Calu3 (cell line): ENCODE measurements at regions of chr3 and their contacts with region 1.

Region 1: GRCh38 chr3:112642912-112643506 is 2.1 kb upstream of the CCDC80 start:
- DNase-seq: peak; percentile 82
- H3K4me3 Mint-ChIP-seq: peak overlapping the region; percentile 31
- H3K27ac Mint-ChIP-seq: no peak overlapping the region
- H3K4me1 Mint-ChIP-seq: peaks cover 37% of the 10 kb centered on the region
- H3K27me3 Mint-ChIP-seq: no peaks in the 10 kb centered on the region
- CTCF ChIP-seq: no peak

Region 2: GRCh38 chr3:112619295-112619694 is 23.7 kb before region 1 on chr3:
- CTCF ChIA-PET with region 1: no interaction called
- intact Hi-C with region 1: no loop called
- DNase-seq: no peak
- H3K4me3 Mint-ChIP-seq: no peak overlapping the region
- H3K27ac Mint-ChIP-seq: no peak overlapping the region
- H3K4me1 Mint-ChIP-seq: peaks cover 13% of the 10 kb centered on the region
- H3K27me3 Mint-ChIP-seq: no peaks in the 10 kb centered on the region
- CTCF ChIP-seq: no peak

Region 3: GRCh38 chr3:112699436-112699978 is 56.5 kb after region 1 on chr3:
- CTCF ChIA-PET with region 1: no interaction called
- intact Hi-C with region 1: loop called (anchors 1 kb)
- DNase-seq: peak; percentile 37
- H3K4me3 Mint-ChIP-seq: no peak overlapping the region
- H3K27ac Mint-ChIP-seq: no peak overlapping the region
- H3K4me1 Mint-ChIP-seq: no peaks in the 10 kb centered on the region
- H3K27me3 Mint-ChIP-seq: peaks cover 11% of the 10 kb centered on the region
- CTCF ChIP-seq: no peak

Region 4: GRCh38 chr3:112814266-112814665 is 171.3 kb after region 1 on chr3:
- CTCF ChIA-PET with region 1: interaction called, 13 read pairs
- intact Hi-C with region 1: loop called (anchors 1 kb)
- DNase-seq: no peak
- H3K4me3 Mint-ChIP-seq: no peak overlapping the region
- H3K27ac Mint-ChIP-seq: no peak overlapping the region
- H3K4me1 Mint-ChIP-seq: peaks cover 11% of the 10 kb centered on the region
- H3K27me3 Mint-ChIP-seq: no peaks in the 10 kb centered on the region
- CTCF ChIP-seq: no peak

Region 5: GRCh38 chr3:112979240-112979832 is 336.3 kb after region 1 on chr3:
- CTCF ChIA-PET with region 1: interaction called, 12 read pairs
- intact Hi-C with region 1: loop called (anchors 2 kb)
- DNase-seq: peak; percentile 4
- H3K4me3 Mint-ChIP-seq: no peak overlapping the region
- H3K27ac Mint-ChIP-seq: no peak overlapping the region
- H3K4me1 Mint-ChIP-seq: no peaks in the 10 kb centered on the region
- H3K27me3 Mint-ChIP-seq: no peaks in the 10 kb centered on the region
- CTCF ChIP-seq: peak; percentile 42